ENCODE measurements at regions of chr5 and their contacts with region 1.

Region 1: GRCh38 chr5:96868603-96869371 is 7.5 kb upstream of the ERAP2 start:
- DNase-seq: peak; percentile 70
- H3K4me3 ChIP-seq: no peak overlapping the region
- H3K27ac ChIP-seq: no peak overlapping the region
- H3K4me1 ChIP-seq: no peaks in the 10 kb centered on the region
- H3K27me3 ChIP-seq: no peaks in the 10 kb centered on the region
- CTCF ChIP-seq: peak; percentile 80 to 88
- POLR2A ChIP-seq: no peak

Region 2: DNA sequence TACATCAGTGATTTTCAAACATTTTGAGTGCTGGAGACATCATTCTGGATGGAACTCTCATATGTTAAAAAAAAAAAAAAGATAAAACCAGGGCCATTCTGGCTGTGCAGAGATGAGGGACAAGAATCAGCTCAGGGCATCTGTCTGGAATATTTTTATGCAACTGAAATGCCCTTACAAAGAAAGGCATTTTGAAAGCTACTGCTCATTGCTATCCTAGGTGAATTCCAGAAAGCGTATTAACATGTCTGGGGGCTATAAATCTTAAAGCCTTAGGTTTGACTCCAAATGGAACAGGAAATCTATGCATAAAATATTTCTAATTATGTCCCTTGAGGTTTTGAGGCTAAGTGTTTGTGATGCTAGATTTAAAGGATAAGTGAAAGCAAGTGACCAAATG is 420.8 kb before region 1 on chr5:
- CTCF ChIA-PET with region 1: no interaction called
- POLR2A ChIA-PET with region 1: no interaction called
- dilution Hi-C with region 1: no loop called
- intact Hi-C with region 1: no loop called
- DNase-seq: no peak
- H3K4me3 ChIP-seq: no peak overlapping the region
- H3K27ac ChIP-seq: no peak overlapping the region
- H3K4me1 ChIP-seq: no peaks in the 10 kb centered on the region
- H3K27me3 ChIP-seq: no peaks in the 10 kb centered on the region
- CTCF ChIP-seq: no peak
- POLR2A ChIP-seq: no peak

Region 3: GRCh38 chr5:96752341-96753016 is 116.3 kb before region 1 on chr5:
- CTCF ChIA-PET with region 1: interaction called, 28 read pairs
- POLR2A ChIA-PET with region 1: no interaction called
- dilution Hi-C with region 1: no loop called
- intact Hi-C with region 1: no loop called
- DNase-seq: peak; percentile 71
- H3K4me3 ChIP-seq: no peak overlapping the region
- H3K27ac ChIP-seq: no peak overlapping the region
- H3K4me1 ChIP-seq: peaks cover 3% of the 10 kb centered on the region
- H3K27me3 ChIP-seq: no peaks in the 10 kb centered on the region
- CTCF ChIP-seq: peak; percentile 36 to 55
- POLR2A ChIP-seq: no peak

Region 4: GRCh38 chr5:96856371-96856770 is 12.4 kb before region 1 on chr5:
- CTCF ChIA-PET with region 1: interaction called, 24 read pairs
- POLR2A ChIA-PET with region 1: no interaction called
- dilution Hi-C with region 1: no loop called
- intact Hi-C with region 1: no loop called
- DNase-seq: no peak
- H3K4me3 ChIP-seq: no peak overlapping the region
- H3K27ac ChIP-seq: no peak overlapping the region
- H3K4me1 ChIP-seq: no peaks in the 10 kb centered on the region
- H3K27me3 ChIP-seq: no peaks in the 10 kb centered on the region
- CTCF ChIP-seq: no peak
- POLR2A ChIP-seq: no peak

Region 5: GRCh38 chr5:96901384-96901783 is 32.6 kb after region 1 on chr5:
- CTCF ChIA-PET with region 1: interaction called, 25 read pairs
- POLR2A ChIA-PET with region 1: no interaction called
- dilution Hi-C with region 1: no loop called
- intact Hi-C with region 1: loop called (anchors 2 kb)
- DNase-seq: no peak
- H3K4me3 ChIP-seq: no peak overlapping the region
- H3K27ac ChIP-seq: no peak overlapping the region
- H3K4me1 ChIP-seq: no peaks in the 10 kb centered on the region
- H3K27me3 ChIP-seq: no peaks in the 10 kb centered on the region
- CTCF ChIP-seq: no peak
- POLR2A ChIP-seq: no peak

Region 6: DNA sequence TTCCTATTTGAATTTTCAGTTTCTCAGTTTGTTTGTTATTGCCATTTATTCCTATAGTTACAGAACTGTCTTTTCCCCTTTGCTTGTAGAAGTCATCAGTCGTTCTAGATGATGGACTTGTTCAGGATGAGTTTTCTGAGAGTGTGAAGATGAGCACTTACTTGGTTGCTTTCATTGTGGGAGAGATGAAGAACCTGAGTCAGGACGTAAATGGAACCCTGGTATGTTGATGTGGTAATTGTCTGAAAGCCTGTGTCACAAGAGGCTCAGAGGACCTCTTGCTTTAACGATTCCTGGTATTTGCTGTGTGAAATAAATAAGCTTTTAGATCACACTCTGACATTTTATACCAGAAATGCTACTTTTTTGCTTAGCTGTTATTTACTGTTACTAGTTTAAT is 117.7 kb after region 1 on chr5:
- CTCF ChIA-PET with region 1: interaction called, 11 read pairs
- POLR2A ChIA-PET with region 1: no interaction called
- dilution Hi-C with region 1: no loop called
- intact Hi-C with region 1: no loop called
- DNase-seq: no peak
- H3K4me3 ChIP-seq: no peak overlapping the region
- H3K27ac ChIP-seq: no peak overlapping the region
- H3K4me1 ChIP-seq: no peaks in the 10 kb centered on the region
- H3K27me3 ChIP-seq: no peaks in the 10 kb centered on the region
- CTCF ChIP-seq: no peak
- POLR2A ChIP-seq: no peak

Region 7: DNA sequence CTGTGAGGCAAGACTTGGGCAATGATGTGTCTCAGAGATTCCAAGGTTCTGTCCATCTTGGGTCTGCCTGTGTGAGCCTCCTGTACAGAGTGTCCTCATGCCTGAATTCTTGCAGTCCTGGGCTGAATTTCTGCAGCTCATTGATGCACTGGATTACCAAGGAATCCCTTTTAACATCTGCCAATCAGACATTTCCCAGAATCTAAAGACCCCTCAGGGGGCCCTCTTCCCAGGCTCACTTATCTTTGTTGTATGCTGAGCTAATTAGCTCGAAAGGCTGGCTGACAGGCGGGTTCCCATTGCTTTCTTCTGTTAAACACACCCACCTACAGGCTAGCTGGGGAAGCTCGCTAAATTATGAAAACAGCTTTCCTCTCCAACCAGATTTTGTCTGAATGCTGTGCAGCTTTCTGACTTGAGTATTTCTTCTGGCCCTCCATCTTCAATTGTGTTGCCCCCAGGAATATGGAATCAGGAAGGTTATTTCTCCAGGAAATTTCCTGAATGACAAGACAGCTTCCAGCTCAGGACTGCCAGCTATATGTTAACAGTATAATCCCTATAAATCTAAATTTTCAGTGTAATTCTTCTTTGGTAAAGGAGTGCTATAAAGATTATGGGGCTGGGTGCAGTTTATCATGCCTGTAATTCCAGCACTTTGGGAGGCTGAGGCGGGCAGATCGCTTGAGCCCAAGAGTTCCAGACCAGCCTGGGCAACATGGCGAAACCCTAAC is 273.9 kb after region 1 on chr5 and contains the start of gene LIX1:
- CTCF ChIA-PET with region 1: interaction called, 81 read pairs
- POLR2A ChIA-PET with region 1: no interaction called
- dilution Hi-C with region 1: no loop called
- intact Hi-C with region 1: loop called (anchors 1 kb)
- DNase-seq: peak; percentile 50
- H3K4me3 ChIP-seq: no peak within 1 kb of the TSS
- H3K27ac ChIP-seq: no peak within 1 kb of the TSS
- H3K4me1 ChIP-seq: no peaks in the 10 kb centered on the region
- H3K27me3 ChIP-seq: peaks cover 5 to 13% of the 10 kb centered on the region in 2 experiments
- CTCF ChIP-seq: peak; percentile 52 to 53
- POLR2A ChIP-seq: no peak
- total RNA-seq, gene LIX1: not detected in 2 replicates

Measured in endothelial cell of umbilical vein (primary cell).